ENCODE measurements at regions of chr18 and their contacts with region 1.

Region 1: GRCh38 chr18:9661564-9661963 is 46.5 kb upstream of the RAB31 start:
- DNase-seq: peak; percentile 56
- ATAC-seq: peak; percentile 17; the same call in 1 of the 2 replicates
- H3K4me3 ChIP-seq: no peak overlapping the region
- H3K27ac ChIP-seq: no peak overlapping the region
- H3K4me1 ChIP-seq: peaks cover 25% of the 10 kb centered on the region
- H3K27me3 ChIP-seq: no peaks in the 10 kb centered on the region
- CTCF ChIP-seq: peak; percentile 68

Region 2: DNA sequence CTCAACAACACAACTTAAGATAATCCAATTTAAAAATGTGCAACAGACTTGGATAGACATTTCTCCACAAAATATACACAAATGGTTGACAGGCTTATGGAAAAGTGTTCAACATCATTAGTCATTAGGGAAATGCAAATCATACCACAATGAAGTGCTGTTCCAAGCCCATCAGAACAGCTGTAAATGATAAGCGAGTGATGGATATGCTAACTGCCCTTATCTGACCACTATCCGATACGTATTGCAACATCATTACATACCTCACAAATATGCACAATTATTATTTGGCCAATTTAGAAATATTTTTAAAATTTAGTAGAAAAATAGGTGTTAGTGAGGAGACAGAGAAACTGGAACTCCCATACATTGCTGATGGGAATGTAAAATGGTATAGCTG is 109.4 kb before region 1 on chr18:
- CTCF ChIA-PET with region 1: no interaction called
- POLR2A ChIA-PET with region 1: no interaction called
- intact Hi-C with region 1: no loop called
- DNase-seq: no peak
- ATAC-seq: no peak
- H3K4me3 ChIP-seq: no peak overlapping the region
- H3K27ac ChIP-seq: no peak overlapping the region
- H3K4me1 ChIP-seq: no peaks in the 10 kb centered on the region
- H3K27me3 ChIP-seq: no peaks in the 10 kb centered on the region
- CTCF ChIP-seq: no peak

Region 3: DNA sequence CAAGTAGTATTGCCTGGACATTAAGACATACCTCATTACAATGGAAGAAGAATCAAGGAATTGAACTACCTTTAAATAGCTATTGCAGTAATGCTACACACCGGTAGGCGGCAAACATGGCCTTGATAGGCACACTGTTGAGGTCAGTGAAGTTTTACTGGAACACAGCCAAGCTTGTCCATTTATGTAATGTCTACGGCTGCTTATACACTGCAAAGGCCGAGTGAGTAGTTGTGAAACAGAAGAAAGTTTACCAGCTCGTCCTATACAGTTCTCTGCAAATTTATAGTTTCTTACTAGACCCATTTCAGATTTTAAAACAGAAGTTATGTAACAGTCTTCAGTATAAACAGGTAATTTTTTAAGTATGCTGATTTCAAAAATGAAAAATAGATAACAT is 86.0 kb before region 1 on chr18:
- CTCF ChIA-PET with region 1: interaction called, 16 read pairs
- POLR2A ChIA-PET with region 1: no interaction called
- intact Hi-C with region 1: no loop called
- DNase-seq: peak; percentile 95
- ATAC-seq: peak; percentile 98
- H3K4me3 ChIP-seq: no peak overlapping the region
- H3K27ac ChIP-seq: peak overlapping the region; percentile 2; the same call in 1 of the 2 replicates
- H3K4me1 ChIP-seq: peaks cover 5% of the 10 kb centered on the region; the same call in 1 of the 2 replicates
- H3K27me3 ChIP-seq: no peaks in the 10 kb centered on the region
- CTCF ChIP-seq: peak; percentile 95

Region 4: DNA sequence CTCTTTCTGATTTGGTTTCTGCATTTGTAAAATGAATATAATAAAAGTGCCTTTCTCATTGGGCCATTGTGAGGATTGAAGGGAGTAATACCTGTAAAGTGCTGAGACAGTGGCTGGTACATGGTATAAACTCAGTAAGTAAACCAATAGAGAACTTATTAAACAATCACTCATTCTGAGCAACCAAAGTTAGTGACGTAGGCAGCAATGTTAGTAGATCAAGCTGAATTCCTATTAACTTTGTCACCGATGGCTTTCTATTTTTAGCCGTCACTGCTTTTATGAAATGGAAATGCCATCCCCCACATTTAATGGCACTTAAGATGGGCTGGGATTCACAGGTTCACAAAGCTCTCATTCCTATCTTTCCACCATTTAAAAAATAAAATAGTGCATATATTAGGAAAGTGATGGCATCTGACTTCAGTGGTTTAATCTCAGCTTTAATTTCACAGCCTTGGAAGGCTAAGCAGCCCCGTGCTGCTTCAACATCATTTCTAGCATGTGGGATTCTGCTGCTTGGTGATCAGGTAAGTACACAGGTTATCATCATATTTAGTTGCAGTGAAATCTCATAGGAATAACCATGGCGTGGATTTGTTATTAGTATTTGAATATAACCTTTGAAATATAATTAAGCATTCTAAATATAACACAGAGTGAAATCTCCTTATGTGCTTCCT is 29.6 kb before region 1 on chr18:
- CTCF ChIA-PET with region 1: no interaction called
- POLR2A ChIA-PET with region 1: no interaction called
- intact Hi-C with region 1: loop called (anchors 1 kb)
- DNase-seq: peak; percentile 97
- ATAC-seq: peak; percentile 100
- H3K4me3 ChIP-seq: peak overlapping the region; percentile 12; the same call in 1 of the 2 replicates
- H3K27ac ChIP-seq: peak overlapping the region; percentile 95
- H3K4me1 ChIP-seq: peaks cover 32% of the 10 kb centered on the region
- H3K27me3 ChIP-seq: no peaks in the 10 kb centered on the region
- CTCF ChIP-seq: no peak

Region 5: GRCh38 chr18:9643549-9643948 is 18.0 kb before region 1 on chr18:
- CTCF ChIA-PET with region 1: interaction called, 4 read pairs
- POLR2A ChIA-PET with region 1: interaction called, 6 read pairs
- intact Hi-C with region 1: loop called (anchors 1 kb)
- DNase-seq: peak; percentile 98
- ATAC-seq: peak; percentile 93
- H3K4me3 ChIP-seq: peak overlapping the region; percentile 8; the same call in 1 of the 2 replicates
- H3K27ac ChIP-seq: peak overlapping the region; percentile 88
- H3K4me1 ChIP-seq: peaks cover 43% of the 10 kb centered on the region
- H3K27me3 ChIP-seq: no peaks in the 10 kb centered on the region
- CTCF ChIP-seq: no peak

Region 6: DNA sequence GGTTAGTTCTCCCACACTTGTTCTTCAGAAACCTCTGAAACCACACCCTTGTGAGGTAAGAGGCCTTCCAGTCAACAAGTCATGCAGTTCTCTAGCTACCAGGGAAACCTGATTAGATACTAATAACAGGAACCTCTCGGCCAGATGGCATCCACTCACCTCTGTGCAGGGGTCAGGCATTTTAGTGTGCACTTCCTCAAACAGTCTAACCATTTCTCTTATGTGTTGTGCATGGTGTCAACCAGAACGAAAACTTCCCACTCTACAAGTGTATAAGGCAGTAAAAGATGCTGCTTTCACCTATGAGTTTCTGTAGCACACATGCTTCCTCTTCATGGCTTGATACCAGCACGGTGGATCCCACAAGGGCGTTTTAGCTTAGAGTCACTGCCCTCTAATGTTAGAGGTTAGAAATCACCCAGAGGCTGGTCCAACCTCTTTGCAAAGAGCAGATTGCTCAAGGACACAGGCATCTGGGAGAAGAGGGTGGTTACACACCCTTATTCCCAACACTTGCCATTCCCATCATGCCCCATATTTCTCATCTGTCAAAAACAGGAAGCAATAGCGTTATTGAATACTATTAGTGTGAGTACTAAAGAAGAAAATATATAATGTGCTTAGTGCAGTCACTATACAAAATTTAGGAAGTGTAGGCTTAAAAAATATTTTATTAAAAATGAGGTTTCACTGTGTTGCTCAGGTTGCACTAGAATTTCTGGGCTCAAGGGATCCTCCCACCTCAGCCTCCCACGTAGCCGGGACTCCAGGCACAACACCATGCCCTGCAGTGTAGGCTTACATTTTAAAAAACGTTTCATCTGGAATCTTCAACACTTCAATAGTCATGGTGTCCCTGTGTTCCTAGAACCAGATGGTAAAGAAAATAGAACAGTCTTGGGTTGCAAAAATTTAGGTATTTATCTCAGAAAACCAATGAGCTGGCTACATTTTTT is 12.0 kb after region 1 on chr18:
- CTCF ChIA-PET with region 1: interaction called, 3 read pairs
- POLR2A ChIA-PET with region 1: no interaction called
- intact Hi-C with region 1: loop called (anchors 1 kb)
- DNase-seq: peak; percentile 94
- ATAC-seq: peak; percentile 90
- H3K4me3 ChIP-seq: peak overlapping the region; percentile 3; the same call in 1 of the 2 replicates
- H3K27ac ChIP-seq: peak overlapping the region; percentile 94
- H3K4me1 ChIP-seq: peaks cover 19% of the 10 kb centered on the region
- H3K27me3 ChIP-seq: no peaks in the 10 kb centered on the region
- CTCF ChIP-seq: peak; percentile 65

Region 7: GRCh38 chr18:9708057-9708433 is 46.5 kb after region 1 on chr18 and contains the start of gene RAB31:
- CTCF ChIA-PET with region 1: no interaction called
- POLR2A ChIA-PET with region 1: no interaction called
- intact Hi-C with region 1: no loop called
- DNase-seq: peak; percentile 20
- ATAC-seq: peak; percentile 2; the same call in 1 of the 2 replicates
- H3K4me3 ChIP-seq: peak within 1 kb of the TSS; percentile 63
- H3K27ac ChIP-seq: no peak within 1 kb of the TSS
- H3K4me1 ChIP-seq: peaks cover 19% of the 10 kb centered on the region
- H3K27me3 ChIP-seq: no peaks in the 10 kb centered on the region
- CTCF ChIP-seq: no peak
- total RNA-seq, gene RAB31: 1.7 and 3.8 TPM in 2 replicates

Region 8: DNA sequence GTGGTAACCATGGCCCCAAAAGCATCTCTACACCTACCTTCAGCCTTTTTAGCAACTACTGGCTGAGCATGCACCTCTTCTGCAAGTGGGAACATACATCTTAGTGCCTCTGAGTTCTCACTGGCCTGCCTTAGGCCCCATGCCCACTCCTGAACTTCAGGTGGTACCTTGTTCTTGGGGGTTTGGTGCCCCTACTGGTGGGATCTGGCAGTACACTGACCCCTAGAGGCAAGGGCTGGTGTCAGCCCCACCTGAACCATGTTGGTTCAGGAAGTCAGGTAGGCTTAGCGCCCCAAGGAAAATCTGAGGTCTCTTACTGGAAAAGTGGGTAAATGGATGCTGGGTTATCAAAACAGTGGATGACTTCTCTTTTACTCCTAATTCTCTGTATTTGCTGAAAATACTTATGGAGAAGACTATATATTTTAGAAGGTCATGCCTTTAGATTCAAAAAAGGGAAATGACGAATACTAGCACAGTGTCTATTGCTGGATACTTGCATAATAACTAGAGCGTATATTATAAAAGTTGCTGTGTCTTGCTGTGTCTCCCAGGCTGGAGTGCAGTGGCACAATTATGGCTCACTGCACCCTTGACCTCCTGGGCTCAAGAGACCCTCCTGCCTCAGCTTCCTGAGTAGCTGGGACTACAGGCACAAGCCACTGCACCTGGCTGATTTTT is 131.1 kb after region 1 on chr18:
- CTCF ChIA-PET with region 1: no interaction called
- POLR2A ChIA-PET with region 1: no interaction called
- intact Hi-C with region 1: no loop called
- DNase-seq: peak; percentile 33
- ATAC-seq: no peak
- H3K4me3 ChIP-seq: no peak overlapping the region
- H3K27ac ChIP-seq: no peak overlapping the region
- H3K4me1 ChIP-seq: no peaks in the 10 kb centered on the region
- H3K27me3 ChIP-seq: no peaks in the 10 kb centered on the region
- CTCF ChIP-seq: peak; percentile 76